ENCODE measurements at regions of chr6 and their contacts with region 1.

Region 1: GRCh38 chr6:24966381-24966780 is 30.6 kb upstream of the RIPOR2 start:
- DNase-seq: no peak
- ATAC-seq: no peak
- H3K4me3 ChIP-seq: no peak overlapping the region
- H3K4me3 Mint-ChIP-seq: no peak overlapping the region
- H3K27ac ChIP-seq: no peak overlapping the region
- H3K27ac Mint-ChIP-seq: no peak overlapping the region
- H3K4me1 ChIP-seq: peaks cover 34 to 56% of the 10 kb centered on the region in 2 experiments
- H3K4me1 Mint-ChIP-seq: peaks cover 87 to 90% (median 89%) of the 10 kb centered on the region in 3 donors
- H3K27me3 ChIP-seq: no peaks in the 10 kb centered on the region
- H3K27me3 Mint-ChIP-seq: no peaks in the 10 kb centered on the region

Region 2: GRCh38 chr6:24949020-24949569 is 17.3 kb before region 1 on chr6:
- CTCF ChIA-PET with region 1: interaction called, 3 to 10 read pairs
- POLR2A ChIA-PET with region 1: no interaction called
- DNase-seq: peak in 34 of 35 experiments; percentile 39 to 82 (median 60)
- ATAC-seq: peak; percentile 69 to 81 (median 78)
- H3K4me3 ChIP-seq: peak overlapping the region; percentile 24 to 60
- H3K4me3 Mint-ChIP-seq: peak overlapping the region; percentile 55 to 76 (median 60)
- H3K27ac ChIP-seq: peak overlapping the region; percentile 76
- H3K27ac Mint-ChIP-seq: peak overlapping the region; percentile 96 to 98
- H3K4me1 ChIP-seq: peaks cover 63 to 68% of the 10 kb centered on the region in 2 experiments
- H3K4me1 Mint-ChIP-seq: peaks cover 75 to 82% (median 78%) of the 10 kb centered on the region in 3 donors
- H3K27me3 ChIP-seq: no peaks in the 10 kb centered on the region
- H3K27me3 Mint-ChIP-seq: no peaks in the 10 kb centered on the region

Region 3: DNA sequence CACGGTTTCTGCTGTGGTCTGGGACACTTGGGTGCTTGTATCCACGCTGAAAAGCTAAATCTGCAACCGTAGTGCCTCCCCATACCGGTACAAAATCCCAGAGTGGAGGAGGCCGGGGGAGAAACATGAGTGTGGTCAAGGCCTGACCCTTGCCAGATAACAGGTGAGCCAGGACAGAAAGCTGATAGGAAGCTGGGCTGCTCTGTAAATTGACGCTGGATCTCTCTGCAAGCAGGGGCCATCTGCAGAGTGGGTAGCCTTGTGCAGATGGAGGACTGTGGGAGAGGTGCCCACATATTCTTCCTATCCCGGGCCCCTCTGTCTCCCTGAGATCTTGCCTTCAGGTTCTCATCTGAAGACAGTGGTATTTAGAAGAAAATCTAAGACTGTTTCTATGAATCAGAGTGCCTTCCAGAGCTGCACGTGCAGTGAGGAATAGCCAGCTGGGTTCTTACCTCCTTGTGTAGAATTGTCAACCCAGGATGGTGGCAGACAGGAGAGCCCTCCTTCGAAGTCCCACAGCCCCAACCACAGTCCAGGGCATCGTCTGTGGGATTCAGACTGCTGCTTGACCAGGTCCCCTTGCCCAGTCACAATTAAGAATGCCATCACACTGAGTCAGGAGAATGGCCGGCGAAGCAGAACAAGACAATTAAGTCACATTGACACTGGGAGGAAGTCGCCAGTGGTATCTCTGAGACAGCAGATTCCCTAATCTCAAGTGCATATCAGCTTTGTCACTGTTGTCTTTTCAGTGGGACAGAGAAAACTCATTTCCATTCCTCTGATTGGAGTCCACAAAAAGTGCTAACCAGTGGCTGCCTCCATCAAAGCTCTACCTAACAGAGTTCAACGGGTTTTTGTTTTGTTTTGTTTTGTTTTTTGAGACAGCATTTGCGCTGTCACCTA is 69.4 kb after region 1 on chr6:
- CTCF ChIA-PET with region 1: no interaction called
- POLR2A ChIA-PET with region 1: no interaction called
- DNase-seq: peak in 1 of 35 experiments; percentile 56
- ATAC-seq: peak; percentile 43 to 62 (median 56)
- H3K4me3 ChIP-seq: peak overlapping the region; percentile 25 to 31
- H3K4me3 Mint-ChIP-seq: peak overlapping the region; percentile 76 to 82 (median 79)
- H3K27ac ChIP-seq: peak overlapping the region; percentile 82
- H3K27ac Mint-ChIP-seq: peak overlapping the region; percentile 90 to 100
- H3K4me1 ChIP-seq: peaks cover 33 to 52% of the 10 kb centered on the region in 2 experiments
- H3K4me1 Mint-ChIP-seq: peaks cover 71 to 76% (median 75%) of the 10 kb centered on the region in 3 donors
- H3K27me3 ChIP-seq: no peaks in the 10 kb centered on the region
- H3K27me3 Mint-ChIP-seq: no peaks in the 10 kb centered on the region

Region 4: DNA sequence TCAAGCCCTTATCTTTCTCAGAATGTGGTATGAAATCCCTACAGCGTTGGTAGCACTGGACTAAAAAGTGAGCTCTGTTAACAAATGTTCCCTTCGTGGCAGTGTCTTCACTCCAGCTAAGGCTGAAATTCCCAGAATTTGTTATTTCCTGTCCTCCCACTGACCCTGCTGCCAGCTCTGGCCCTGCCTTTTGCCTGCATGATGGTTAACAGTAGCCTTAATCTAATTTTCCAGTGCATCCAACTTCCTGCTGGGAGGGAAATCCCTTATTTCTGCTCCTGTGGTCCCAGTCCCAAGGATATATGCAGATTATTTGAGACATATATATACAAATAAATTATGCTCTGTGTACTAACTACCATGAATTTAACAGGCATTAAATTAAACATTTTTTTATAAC is 155.6 kb after region 1 on chr6:
- CTCF ChIA-PET with region 1: no interaction called
- POLR2A ChIA-PET with region 1: interaction called in 1 of 2 experiments, 10 read pairs
- DNase-seq: no peak
- ATAC-seq: no peak
- H3K4me3 ChIP-seq: no peak overlapping the region
- H3K4me3 Mint-ChIP-seq: no peak overlapping the region
- H3K27ac ChIP-seq: no peak overlapping the region
- H3K27ac Mint-ChIP-seq: no peak overlapping the region
- H3K4me1 ChIP-seq: peaks cover 4 to 8% of the 10 kb centered on the region in 2 experiments
- H3K4me1 Mint-ChIP-seq: peaks cover 29 to 51% (median 44%) of the 10 kb centered on the region in 3 donors
- H3K27me3 ChIP-seq: no peaks in the 10 kb centered on the region
- H3K27me3 Mint-ChIP-seq: no peaks in the 10 kb centered on the region

Measured in T-cell (primary cell).